ENCODE measurements at regions of chr1 and their contacts with region 1.

Region 1: GRCh38 chr1:84122780-84123382 is 21.2 kb upstream of the PRKACB start:
- DNase-seq: peak; percentile 16 to 71 (median 31)
- ATAC-seq: peak; percentile 95
- H3K4me3 ChIP-seq: no peak overlapping the region
- H3K27ac ChIP-seq: no peak overlapping the region
- H3K4me1 ChIP-seq: peaks cover 0 to 4% of the 10 kb centered on the region in 2 experiments; a peak in 2 of 5 replicates
- H3K27me3 ChIP-seq: no peaks in the 10 kb centered on the region
- CTCF ChIP-seq: peak; percentile 65 to 85 (median 65)
- EP300 ChIP-seq: no peak
- POLR2A ChIP-seq: no peak
- RAD21 ChIP-seq: peak; percentile 93 to 95

Region 2: DNA sequence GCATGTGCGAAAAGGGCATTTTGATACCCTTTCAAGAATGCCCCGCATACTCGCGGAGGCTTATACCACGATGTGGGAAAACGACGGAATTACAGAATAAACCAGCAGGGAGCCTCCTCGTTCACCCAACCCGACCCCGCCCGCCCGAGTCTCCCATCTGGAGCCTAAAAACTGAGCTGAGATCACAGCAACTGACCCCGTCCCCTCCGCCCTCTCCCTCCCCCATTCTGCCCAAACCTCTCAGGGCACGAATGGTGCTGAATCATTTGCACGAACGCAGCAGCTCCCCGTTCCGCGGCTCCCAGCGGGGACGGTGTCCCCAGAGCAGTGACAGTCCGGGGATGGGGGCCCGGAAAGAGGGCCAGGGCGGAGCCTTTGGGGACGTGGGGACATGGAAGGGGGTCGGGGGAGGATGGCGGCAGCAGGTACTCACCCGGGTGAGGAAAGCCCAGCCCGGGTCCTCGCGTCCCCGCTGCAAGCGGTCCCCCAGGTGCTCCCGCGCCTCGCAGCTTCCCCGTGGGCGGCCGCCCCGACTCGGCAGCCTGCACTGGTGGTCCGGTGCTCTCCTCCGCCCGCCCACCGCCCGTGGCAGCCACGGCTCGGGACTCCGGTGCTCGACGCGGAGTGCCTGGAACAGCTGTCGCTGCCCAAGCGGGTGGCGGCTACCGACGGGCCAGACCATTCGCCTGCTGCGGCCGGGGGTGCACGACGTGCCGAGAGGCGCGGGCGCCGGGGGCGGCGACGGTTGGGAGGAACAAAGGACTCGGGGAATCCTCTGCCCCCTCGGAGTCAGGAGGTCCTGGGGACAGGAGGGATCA is 124.2 kb before region 1 on chr1 and contains the start of gene TTLL7:
- CTCF ChIA-PET with region 1: no interaction called
- POLR2A ChIA-PET with region 1: no interaction called
- in situ Hi-C with region 1: no loop called
- intact Hi-C with region 1: loop called (anchors 5 kb)
- DNase-seq: peak; percentile 76 to 80 (median 80)
- ATAC-seq: peak; percentile 93
- H3K4me3 ChIP-seq: peak within 1 kb of the TSS; percentile 64
- H3K27ac ChIP-seq: peak within 1 kb of the TSS; percentile 85
- H3K4me1 ChIP-seq: peaks cover 3 to 11% of the 10 kb centered on the region in 2 experiments; a peak in 2 of 5 replicates
- H3K27me3 ChIP-seq: no peaks in the 10 kb centered on the region; a peak in 1 of 5 replicates
- CTCF ChIP-seq: 0 out of 6 replicates have a peak, but pooled peaks of 1 of the 3 experiments have one; percentile 10
- EP300 ChIP-seq: no peak
- POLR2A ChIP-seq: no peak
- RAD21 ChIP-seq: no peak
- polyA plus RNA-seq, gene TTLL7: 0.63 to 0.78 TPM

Region 3: DNA sequence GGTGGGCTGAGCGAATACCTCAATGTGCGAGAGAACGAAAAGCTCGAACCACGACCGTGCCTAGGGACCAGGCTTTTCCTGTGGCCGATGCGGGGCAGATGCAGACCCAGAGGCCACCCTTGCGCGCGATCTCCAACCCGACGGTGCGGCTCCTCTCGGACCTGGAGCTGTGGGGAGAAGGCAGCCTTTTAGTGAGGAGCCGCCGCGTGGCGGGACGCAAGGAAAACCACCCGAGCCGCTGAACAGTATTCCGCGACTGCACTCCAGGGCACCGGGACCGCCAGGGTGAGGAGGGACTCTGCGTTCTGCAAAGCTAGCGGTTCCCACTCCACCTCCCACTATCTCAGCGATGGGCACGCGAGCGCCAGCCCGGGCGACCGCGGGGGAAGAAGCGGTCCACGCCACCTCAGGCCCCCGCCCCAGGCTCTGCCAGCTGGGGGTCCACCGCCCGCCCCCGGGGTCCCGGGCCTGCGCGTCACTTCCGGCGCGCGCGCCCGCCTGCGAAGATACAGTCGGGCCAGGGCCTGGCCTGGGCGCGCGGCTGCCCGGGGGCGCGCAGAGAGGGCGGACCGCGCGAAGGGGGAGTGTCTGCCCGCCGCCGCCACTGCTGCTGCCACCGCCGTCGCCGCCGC is 45.3 kb before region 1 on chr1:
- CTCF ChIA-PET with region 1: no interaction called
- POLR2A ChIA-PET with region 1: no interaction called
- in situ Hi-C with region 1: no loop called
- intact Hi-C with region 1: loop called (anchors 5 kb)
- DNase-seq: peak; percentile 83 to 92 (median 88)
- ATAC-seq: peak; percentile 92
- H3K4me3 ChIP-seq: peak overlapping the region; percentile 83
- H3K27ac ChIP-seq: peak overlapping the region; percentile 86
- H3K4me1 ChIP-seq: peaks cover 0 to 10% of the 10 kb centered on the region in 2 experiments; a peak in 2 of 5 replicates
- H3K27me3 ChIP-seq: no peaks in the 10 kb centered on the region
- CTCF ChIP-seq: no peak
- EP300 ChIP-seq: no peak
- POLR2A ChIP-seq: peak; percentile 85
- RAD21 ChIP-seq: peak in 1 of 2 experiments; percentile 21; a peak in 1 of 4 replicates

Region 4: DNA sequence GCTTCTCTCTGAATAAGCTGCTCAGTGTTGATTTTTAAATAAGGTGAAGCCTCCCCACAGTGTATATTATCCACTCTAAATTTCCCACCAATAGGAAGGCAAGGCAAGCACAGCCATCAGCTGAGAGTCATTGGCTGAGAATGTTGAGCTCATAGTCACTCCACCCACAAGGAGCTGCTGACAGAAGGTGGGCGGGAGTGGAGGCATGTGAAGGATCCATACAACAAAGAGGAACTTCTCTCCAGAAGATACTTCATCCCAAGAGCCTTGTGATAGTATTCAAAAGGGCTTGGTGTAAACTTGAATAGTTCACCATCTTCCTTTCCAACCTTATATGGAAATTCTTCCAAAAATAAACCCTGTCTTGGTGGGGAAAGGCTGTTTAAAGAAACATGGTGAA is 221.4 kb after region 1 on chr1:
- CTCF ChIA-PET with region 1: no interaction called
- POLR2A ChIA-PET with region 1: no interaction called
- in situ Hi-C with region 1: no loop called
- intact Hi-C with region 1: no loop called
- DNase-seq: peak in 2 of 4 experiments; percentile 22 to 30
- ATAC-seq: peak; percentile 75
- H3K4me3 ChIP-seq: no peak overlapping the region
- H3K27ac ChIP-seq: no peak overlapping the region
- H3K4me1 ChIP-seq: no peaks in the 10 kb centered on the region; a peak in 2 of 5 replicates
- H3K27me3 ChIP-seq: peaks cover 0 to 4% of the 10 kb centered on the region in 2 experiments; a peak in 2 of 5 replicates
- CTCF ChIP-seq: no peak
- EP300 ChIP-seq: no peak
- POLR2A ChIP-seq: no peak
- RAD21 ChIP-seq: no peak

Region 5: DNA sequence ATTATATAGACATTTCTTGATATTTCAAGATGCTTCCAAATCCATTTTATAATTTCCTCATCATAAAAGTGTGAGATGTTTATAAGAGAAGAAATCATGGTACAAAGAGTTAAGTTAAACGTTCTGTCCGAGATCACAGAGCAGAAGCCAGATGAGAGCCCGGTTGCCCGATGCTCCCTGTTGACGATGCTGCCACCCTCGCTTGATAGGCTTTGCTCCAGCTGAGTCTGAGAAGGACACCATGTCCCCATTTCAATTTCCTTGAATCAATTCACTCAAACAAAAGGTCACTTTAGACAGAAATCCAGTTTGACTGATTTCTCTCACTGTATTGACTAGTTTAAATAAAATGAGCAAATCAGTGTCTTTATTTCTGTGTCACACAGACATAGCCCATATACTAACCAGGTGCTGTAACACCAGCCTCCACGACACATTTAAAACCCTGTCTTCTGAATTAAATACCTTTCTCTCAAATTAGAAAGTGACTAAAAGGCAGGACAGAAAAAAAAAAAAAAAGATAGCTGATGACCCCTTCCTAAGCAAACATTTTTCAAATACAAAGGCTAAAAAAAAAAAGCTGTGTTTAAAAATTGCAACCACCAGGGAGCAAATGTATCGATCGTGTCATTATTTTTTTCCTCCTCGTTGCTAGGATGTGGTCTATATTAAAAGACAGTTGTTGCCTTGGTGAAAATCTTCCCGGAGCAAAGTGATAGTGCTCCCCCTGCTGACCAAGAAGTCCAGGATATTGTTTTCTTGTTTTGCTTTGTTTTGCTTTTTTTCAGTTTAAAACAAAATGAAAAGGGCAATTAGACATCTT is 310.6 kb after region 1 on chr1:
- CTCF ChIA-PET with region 1: no interaction called
- POLR2A ChIA-PET with region 1: no interaction called
- in situ Hi-C with region 1: no loop called
- intact Hi-C with region 1: loop called (anchors 1 kb)
- DNase-seq: peak; percentile 40 to 72 (median 48)
- ATAC-seq: peak; percentile 74; the same call in 2 of the 3 replicates
- H3K4me3 ChIP-seq: no peak overlapping the region
- H3K27ac ChIP-seq: no peak overlapping the region
- H3K4me1 ChIP-seq: no peaks in the 10 kb centered on the region
- H3K27me3 ChIP-seq: no peaks in the 10 kb centered on the region
- CTCF ChIP-seq: peak; percentile 53 to 78 (median 68); a peak in 5 of 6 replicates
- EP300 ChIP-seq: no peak
- POLR2A ChIP-seq: no peak
- RAD21 ChIP-seq: peak; percentile 90 to 94